PC-3 (cell line): ENCODE measurements at regions of chr9 and their contacts with region 1.

Region 1: DNA sequence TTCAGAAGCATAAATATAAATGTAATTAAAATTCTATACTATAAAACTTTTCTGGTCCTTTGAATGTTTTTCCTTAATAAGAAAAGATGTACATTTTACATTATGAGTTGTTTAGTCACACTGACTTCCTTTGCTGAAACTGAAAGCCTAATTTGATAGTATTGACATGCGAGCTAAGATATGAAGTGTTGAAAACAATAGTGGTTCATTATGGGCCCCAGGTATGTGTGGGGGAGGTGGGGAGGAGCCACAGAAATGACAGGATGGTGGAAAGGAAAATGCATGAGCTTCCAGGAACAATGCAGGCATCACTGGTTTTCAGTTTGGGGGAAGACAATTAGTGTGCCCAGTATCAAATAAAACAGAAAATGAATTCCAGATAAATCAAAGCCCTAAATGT is 35.4 kb upstream of the RLN1 start:
- DNase-seq: no peak
- ATAC-seq: no peak
- H3K4me3 ChIP-seq: no peak overlapping the region
- H3K27ac ChIP-seq: no peak overlapping the region
- H3K4me1 ChIP-seq: no peaks in the 10 kb centered on the region
- H3K27me3 ChIP-seq: no peaks in the 10 kb centered on the region
- CTCF ChIP-seq: no peak

Region 2: GRCh38 chr9:5357431-5358105 is 17.5 kb before region 1 on chr9:
- CTCF ChIA-PET with region 1: no interaction called
- POLR2A ChIA-PET with region 1: no interaction called
- intact Hi-C with region 1: loop called (anchors 1 kb)
- DNase-seq: no peak
- ATAC-seq: no peak
- H3K4me3 ChIP-seq: no peak overlapping the region
- H3K27ac ChIP-seq: no peak overlapping the region
- H3K4me1 ChIP-seq: no peaks in the 10 kb centered on the region
- H3K27me3 ChIP-seq: no peaks in the 10 kb centered on the region
- CTCF ChIP-seq: no peak